ENCODE measurements at regions of chr11 and their contacts with region 1.

Region 1: GRCh38 chr11:58524232-58525036 is 16.5 kb upstream of the OR5B21 start:
- DNase-seq: peak; percentile 89
- ATAC-seq: peak; percentile 92
- H3K4me3 ChIP-seq: peak overlapping the region; percentile 0; the same call in 1 of the 2 replicates
- H3K27ac ChIP-seq: peak overlapping the region; percentile 47; the same call in 1 of the 2 replicates
- H3K4me1 ChIP-seq: peaks cover 2% of the 10 kb centered on the region; the same call in 1 of the 2 replicates
- H3K27me3 ChIP-seq: no peaks in the 10 kb centered on the region
- CTCF ChIP-seq: peak; percentile 85
- POLR2A ChIP-seq: 0 out of 2 replicates have a peak, but pooled peaks have one; percentile 26
- RAD21 ChIP-seq: peak; percentile 74

Region 2: GRCh38 chr11:57499413-57499982 is 1024.9 kb before region 1 on chr11:
- CTCF ChIA-PET with region 1: no interaction called
- POLR2A ChIA-PET with region 1: no interaction called
- dilution Hi-C with region 1: no loop called
- in situ Hi-C with region 1: loop called (anchors 25 kb)
- intact Hi-C with region 1: no loop called
- DNase-seq: peak; percentile 82
- ATAC-seq: peak; percentile 100
- H3K4me3 ChIP-seq: peak overlapping the region; percentile 23; the same call in 1 of the 2 replicates
- H3K27ac ChIP-seq: peak overlapping the region; percentile 39; the same call in 1 of the 2 replicates
- H3K4me1 ChIP-seq: peaks cover 15% of the 10 kb centered on the region
- H3K27me3 ChIP-seq: no peaks in the 10 kb centered on the region
- CTCF ChIP-seq: no peak
- POLR2A ChIP-seq: no peak
- RAD21 ChIP-seq: no peak

Region 3: DNA sequence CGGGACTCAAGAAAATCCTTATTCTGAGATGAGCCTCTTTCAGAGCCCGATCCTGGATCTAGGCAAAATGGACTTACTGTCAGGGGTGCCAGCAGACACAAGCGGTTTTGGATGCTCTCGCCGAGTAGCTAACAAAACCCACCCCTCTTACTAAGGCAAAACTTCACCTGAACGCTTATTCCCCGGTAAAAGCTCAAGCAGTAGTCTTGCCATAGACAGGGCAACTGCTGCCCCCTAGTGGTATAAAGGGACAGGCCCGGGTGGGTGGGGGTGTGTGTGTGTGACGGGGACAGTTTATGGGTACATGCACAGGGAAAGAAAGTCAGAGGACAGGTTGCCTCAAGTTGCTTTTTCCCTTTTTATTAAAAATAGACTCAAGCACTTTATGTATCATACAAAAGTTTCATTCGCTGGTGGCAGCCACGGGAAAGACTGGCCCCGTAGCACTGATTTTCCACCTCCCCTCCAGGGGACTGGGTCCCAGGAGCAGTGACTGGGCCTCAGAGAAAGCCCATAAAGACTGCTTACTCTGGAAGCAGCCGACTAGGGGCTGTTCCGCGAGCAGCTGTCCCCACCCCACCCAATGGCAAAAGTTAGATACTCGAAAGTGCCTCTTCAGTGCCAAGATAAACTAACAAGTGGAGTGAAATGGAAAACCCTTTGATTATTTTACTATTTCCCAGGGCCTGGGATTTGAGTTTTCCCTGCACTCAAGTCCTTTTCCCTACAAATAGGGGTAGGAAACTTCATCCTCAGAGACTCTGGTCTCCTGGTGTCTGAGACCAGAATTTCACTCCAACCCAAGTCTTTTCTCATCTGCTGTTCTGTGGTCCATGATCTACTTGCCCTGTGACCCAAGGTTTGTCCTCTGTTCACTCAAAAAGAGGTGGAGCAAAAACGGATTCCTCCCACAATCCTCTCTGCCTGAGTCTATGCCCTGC is 879.4 kb before region 1 on chr11:
- CTCF ChIA-PET with region 1: interaction called, 4 read pairs
- POLR2A ChIA-PET with region 1: no interaction called
- dilution Hi-C with region 1: no loop called
- in situ Hi-C with region 1: no loop called
- intact Hi-C with region 1: loop called (anchors 5 kb)
- DNase-seq: peak; percentile 67
- ATAC-seq: peak; percentile 28; the same call in 1 of the 2 replicates
- H3K4me3 ChIP-seq: no peak overlapping the region
- H3K27ac ChIP-seq: no peak overlapping the region
- H3K4me1 ChIP-seq: peaks cover 34% of the 10 kb centered on the region
- H3K27me3 ChIP-seq: no peaks in the 10 kb centered on the region
- CTCF ChIP-seq: peak; percentile 73
- POLR2A ChIP-seq: no peak
- RAD21 ChIP-seq: peak; percentile 64

Region 4: GRCh38 chr11:57667736-57668435 is 856.5 kb before region 1 on chr11 and contains the start of gene ZDHHC5:
- CTCF ChIA-PET with region 1: no interaction called
- POLR2A ChIA-PET with region 1: no interaction called
- dilution Hi-C with region 1: no loop called
- in situ Hi-C with region 1: no loop called
- intact Hi-C with region 1: loop called (anchors 5 kb)
- DNase-seq: peak; percentile 100
- ATAC-seq: peak; percentile 89
- H3K4me3 ChIP-seq: peak within 1 kb of the TSS; percentile 98
- H3K27ac ChIP-seq: peak within 1 kb of the TSS; percentile 94
- H3K4me1 ChIP-seq: peaks cover 2% of the 10 kb centered on the region; the same call in 1 of the 2 replicates
- H3K27me3 ChIP-seq: no peaks in the 10 kb centered on the region
- CTCF ChIP-seq: peak; percentile 57
- POLR2A ChIP-seq: peak; percentile 93
- RAD21 ChIP-seq: peak; percentile 27
- total RNA-seq, gene ZDHHC5: 19.4 and 21.4 TPM in 2 replicates

Region 5: GRCh38 chr11:57842873-57843272 is 681.6 kb before region 1 on chr11:
- CTCF ChIA-PET with region 1: no interaction called
- POLR2A ChIA-PET with region 1: no interaction called
- dilution Hi-C with region 1: no loop called
- in situ Hi-C with region 1: no loop called
- intact Hi-C with region 1: loop called (anchors 5 kb)
- DNase-seq: no peak
- ATAC-seq: no peak
- H3K4me3 ChIP-seq: no peak overlapping the region
- H3K27ac ChIP-seq: no peak overlapping the region
- H3K4me1 ChIP-seq: no peaks in the 10 kb centered on the region
- H3K27me3 ChIP-seq: no peaks in the 10 kb centered on the region
- CTCF ChIP-seq: no peak
- POLR2A ChIP-seq: no peak
- RAD21 ChIP-seq: no peak